CD4-positive, alpha-beta T cell (primary cell): ENCODE measurements at regions of chr2 and their contacts with region 1.

Region 1: DNA sequence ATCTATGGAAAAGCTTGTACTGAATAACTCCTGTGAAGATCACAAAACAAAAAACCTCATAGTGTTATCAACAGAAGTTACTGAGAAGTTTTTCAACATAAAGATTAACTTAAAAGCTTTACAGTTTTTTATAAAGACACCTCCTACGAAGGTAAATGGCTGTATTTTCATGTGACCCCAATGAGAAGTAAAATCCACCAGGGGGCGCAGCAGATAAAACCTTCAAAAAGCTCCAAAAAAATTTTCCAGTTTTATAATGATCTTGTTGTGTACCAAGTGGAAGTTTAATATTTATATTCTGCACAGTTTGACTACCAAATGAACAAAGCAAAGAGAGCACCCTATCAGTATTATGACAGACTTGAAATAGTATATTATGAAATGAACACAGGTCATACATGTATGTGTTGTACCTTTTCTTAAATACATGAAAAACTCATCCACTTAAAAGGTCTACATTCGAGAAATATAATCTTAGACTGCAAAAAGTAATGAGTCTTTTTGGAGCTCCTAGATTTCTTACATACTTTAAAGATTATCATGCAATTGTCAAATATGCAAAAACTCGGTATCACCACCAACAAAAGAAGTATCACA is 38.5 kb downstream of the PNO1 start:
- DNase-seq: peak in 10 of 14 experiments; percentile 22 to 83 (median 48)
- ATAC-seq: peak; percentile 59
- H3K4me3 ChIP-seq: no peak overlapping the region
- H3K4me3 Mint-ChIP-seq: no peak overlapping the region
- H3K27ac ChIP-seq: no peak overlapping the region
- H3K27ac Mint-ChIP-seq: peak overlapping the region; percentile 64
- H3K4me1 ChIP-seq: no peaks in the 10 kb centered on the region
- H3K4me1 Mint-ChIP-seq: peaks cover 80% of the 10 kb centered on the region
- H3K27me3 ChIP-seq: no peaks in the 10 kb centered on the region
- H3K27me3 Mint-ChIP-seq: no peaks in the 10 kb centered on the region
- CTCF ChIP-seq: peak; percentile 64

Region 2: GRCh38 chr2:68121873-68122679 is 74.1 kb before region 1 on chr2:
- CTCF ChIA-PET with region 1: interaction called, 4 read pairs
- POLR2A ChIA-PET with region 1: no interaction called
- intact Hi-C with region 1: loop called in 1 of 2 experiments (anchors 5 kb)
- DNase-seq: peak; percentile 63 to 86 (median 74)
- ATAC-seq: peak; percentile 56
- H3K4me3 ChIP-seq: no peak overlapping the region
- H3K4me3 Mint-ChIP-seq: no peak overlapping the region
- H3K27ac ChIP-seq: no peak overlapping the region
- H3K27ac Mint-ChIP-seq: no peak overlapping the region
- H3K4me1 ChIP-seq: peaks cover 4% of the 10 kb centered on the region
- H3K4me1 Mint-ChIP-seq: peaks cover 5% of the 10 kb centered on the region
- H3K27me3 ChIP-seq: no peaks in the 10 kb centered on the region
- H3K27me3 Mint-ChIP-seq: no peaks in the 10 kb centered on the region
- CTCF ChIP-seq: peak; percentile 99

Region 3: DNA sequence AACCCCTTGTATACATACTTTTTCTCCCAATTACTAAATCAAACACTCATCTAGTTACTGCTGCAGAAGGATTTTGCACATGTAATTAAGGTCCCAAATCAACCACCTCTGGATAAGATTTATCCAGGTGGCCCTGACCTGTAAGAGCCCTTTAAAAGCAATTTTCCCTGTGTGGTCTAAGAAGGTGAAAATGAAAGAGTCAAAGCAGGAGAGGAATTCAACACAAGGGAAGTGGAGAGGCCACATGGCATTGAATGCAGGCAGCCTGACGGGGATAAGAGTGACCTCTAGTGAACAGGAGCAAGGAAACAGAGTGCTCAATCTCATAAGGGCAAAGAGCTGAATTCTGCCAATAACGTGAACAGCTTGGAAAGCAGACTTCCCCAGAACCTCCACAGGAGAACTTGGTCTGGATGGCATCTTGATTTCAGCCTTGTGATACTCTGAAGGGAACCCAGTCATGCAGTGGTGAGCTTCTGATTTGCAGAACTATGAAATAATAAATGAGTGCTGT is 29.0 kb after region 1 on chr2:
- CTCF ChIA-PET with region 1: interaction called, 11 read pairs
- POLR2A ChIA-PET with region 1: no interaction called
- intact Hi-C with region 1: no loop called
- DNase-seq: peak in 8 of 14 experiments; percentile 6 to 66 (median 38)
- ATAC-seq: peak; percentile 68
- H3K4me3 ChIP-seq: no peak overlapping the region
- H3K4me3 Mint-ChIP-seq: peak overlapping the region; percentile 47
- H3K27ac ChIP-seq: no peak overlapping the region
- H3K27ac Mint-ChIP-seq: peak overlapping the region; percentile 16
- H3K4me1 ChIP-seq: peaks cover 21% of the 10 kb centered on the region
- H3K4me1 Mint-ChIP-seq: peaks cover 99% of the 10 kb centered on the region
- H3K27me3 ChIP-seq: no peaks in the 10 kb centered on the region
- H3K27me3 Mint-ChIP-seq: no peaks in the 10 kb centered on the region
- CTCF ChIP-seq: no peak

Region 4: GRCh38 chr2:68282811-68283418 is 86.7 kb after region 1 on chr2:
- CTCF ChIA-PET with region 1: interaction called, 15 read pairs
- POLR2A ChIA-PET with region 1: no interaction called
- intact Hi-C with region 1: loop called (anchors 2 to 5 kb)
- DNase-seq: peak in 8 of 14 experiments; percentile 3 to 74 (median 24)
- ATAC-seq: peak; percentile 73
- H3K4me3 ChIP-seq: no peak overlapping the region
- H3K4me3 Mint-ChIP-seq: no peak overlapping the region
- H3K27ac ChIP-seq: no peak overlapping the region
- H3K27ac Mint-ChIP-seq: no peak overlapping the region
- H3K4me1 ChIP-seq: no peaks in the 10 kb centered on the region
- H3K4me1 Mint-ChIP-seq: no peaks in the 10 kb centered on the region
- H3K27me3 ChIP-seq: peaks cover 0 to 4% of the 10 kb centered on the region in 2 experiments
- H3K27me3 Mint-ChIP-seq: peaks cover 36% of the 10 kb centered on the region
- CTCF ChIP-seq: peak; percentile 83